Activated CD8-positive, alpha-beta T cell treated with anti-CD3 and anti-CD28 coated beads, Interleukin-2, amount 10 ng/mL, durations not matched to agents 7 days and 5 days (primary cell): ENCODE measurements at regions of chr19 and their contacts with region 1.

Region 1: GRCh38 chr19:7943444-7944176 is at the start of gene TIMM44:
- DNase-seq: peak; percentile 100
- ATAC-seq: peak; percentile 99
- H3K4me3 Mint-ChIP-seq: peak within 1 kb of the TSS; percentile 91
- H3K27ac Mint-ChIP-seq: peak within 1 kb of the TSS; percentile 97
- H3K4me1 Mint-ChIP-seq: peaks cover 39% of the 10 kb centered on the region
- H3K27me3 Mint-ChIP-seq: no peaks in the 10 kb centered on the region
- total RNA-seq, gene TIMM44: 63.6 to 69.6 TPM

Region 2: DNA sequence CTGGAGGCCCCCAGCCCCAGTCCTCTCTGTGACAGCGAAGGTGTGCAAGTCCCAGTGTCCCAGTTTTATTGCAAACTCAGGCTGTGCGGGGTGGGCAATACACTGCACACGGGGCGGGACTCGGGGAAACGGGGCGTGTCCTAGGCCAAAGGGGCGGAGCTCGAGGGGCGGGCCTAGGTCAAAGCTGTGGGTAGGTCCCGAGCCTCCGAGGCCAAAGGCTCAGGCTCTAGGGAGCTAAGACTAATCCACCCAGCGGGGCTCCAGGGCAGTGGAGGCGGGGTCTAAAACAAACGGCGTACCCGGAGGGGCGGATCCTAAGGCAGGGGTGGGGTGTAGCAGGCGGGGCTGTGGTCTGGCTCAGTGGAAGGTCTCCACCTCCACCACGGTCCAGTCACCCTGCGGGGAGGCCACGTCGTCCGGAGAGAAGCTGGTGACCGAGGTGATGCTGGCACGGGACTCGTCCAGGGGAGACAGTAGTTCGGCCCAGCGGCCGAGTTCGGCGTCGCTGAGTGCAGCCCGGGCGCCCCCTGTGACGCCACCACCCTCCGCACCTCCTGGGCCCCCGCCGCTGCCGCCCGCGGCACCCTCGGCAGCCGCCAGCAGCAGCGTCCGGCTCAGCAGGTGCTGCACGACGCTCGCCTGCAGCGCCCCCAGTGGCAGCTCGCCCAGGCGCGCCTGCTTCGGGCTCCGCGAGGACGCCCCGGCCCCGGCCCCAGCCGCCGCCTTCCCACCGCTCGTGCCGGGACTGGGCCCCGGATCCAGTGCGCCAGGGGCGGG is 74.7 kb before region 1 on chr19:
- CTCF ChIA-PET with region 1: interaction called, 16 read pairs
- POLR2A ChIA-PET with region 1: interaction called, 5 read pairs
- DNase-seq: peak; percentile 83
- ATAC-seq: peak; percentile 80
- H3K4me3 Mint-ChIP-seq: peak overlapping the region; percentile 65
- H3K27ac Mint-ChIP-seq: peak overlapping the region; percentile 74
- H3K4me1 Mint-ChIP-seq: peaks cover 47% of the 10 kb centered on the region
- H3K27me3 Mint-ChIP-seq: peaks cover 47% of the 10 kb centered on the region

Region 3: GRCh38 chr19:7883796-7884570 is 59.6 kb before region 1 on chr19:
- CTCF ChIA-PET with region 1: no interaction called
- POLR2A ChIA-PET with region 1: no interaction called
- DNase-seq: no peak
- ATAC-seq: no peak
- H3K4me3 Mint-ChIP-seq: no peak overlapping the region
- H3K27ac Mint-ChIP-seq: no peak overlapping the region
- H3K4me1 Mint-ChIP-seq: no peaks in the 10 kb centered on the region
- H3K27me3 Mint-ChIP-seq: peaks cover 9% of the 10 kb centered on the region

Region 4: DNA sequence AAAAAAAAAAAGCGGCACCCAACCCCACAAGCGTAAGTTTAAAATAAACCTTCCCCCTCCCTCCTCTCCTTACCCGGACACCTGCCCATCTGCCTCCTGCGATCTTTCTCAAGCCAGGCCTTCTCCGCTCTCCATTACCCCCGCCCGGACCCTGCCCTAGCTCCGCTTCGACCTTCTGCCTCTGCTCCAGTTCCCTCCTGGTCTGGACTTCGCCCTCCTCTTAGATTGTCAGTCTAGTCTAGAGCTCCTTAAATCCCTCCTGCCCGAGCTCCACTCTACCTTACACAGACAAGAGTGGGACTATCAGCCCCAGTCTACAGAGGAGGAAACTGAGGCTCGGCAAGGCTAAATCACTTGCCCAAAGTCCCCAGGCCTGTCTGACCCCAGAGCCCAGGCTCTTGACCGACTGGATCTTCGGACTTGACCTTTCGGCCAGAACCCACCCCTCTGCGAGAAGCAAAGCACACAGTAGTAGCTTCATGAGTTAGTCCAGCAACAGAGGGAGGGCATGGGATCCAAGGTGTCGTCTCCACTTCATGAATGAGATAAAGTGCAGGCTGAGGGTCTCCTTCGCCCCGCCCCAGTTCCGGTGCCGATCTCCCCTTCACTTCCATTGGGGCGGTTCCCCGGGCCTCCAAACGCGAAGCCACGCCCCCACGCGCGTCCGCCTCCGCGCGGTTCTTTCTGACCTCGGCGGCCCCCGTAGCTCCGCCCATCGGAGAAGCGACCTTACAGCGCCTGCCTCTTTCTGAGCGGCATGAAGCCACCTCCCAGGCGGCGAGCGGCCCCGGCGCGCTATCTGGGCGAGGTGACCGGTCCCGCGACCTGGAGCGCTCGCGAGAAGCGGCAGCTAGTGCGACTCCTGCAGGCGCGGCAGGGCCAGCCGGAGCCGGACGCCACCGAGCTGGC is 23.7 kb before region 1 on chr19 and contains the start of gene SNAPC2:
- CTCF ChIA-PET with region 1: interaction called, 20 read pairs
- POLR2A ChIA-PET with region 1: interaction called, 17 read pairs
- DNase-seq: peak; percentile 98
- ATAC-seq: peak; percentile 79
- H3K4me3 Mint-ChIP-seq: peak within 1 kb of the TSS; percentile 96
- H3K27ac Mint-ChIP-seq: peak within 1 kb of the TSS; percentile 94
- H3K4me1 Mint-ChIP-seq: peaks cover 47% of the 10 kb centered on the region
- H3K27me3 Mint-ChIP-seq: peaks cover 30% of the 10 kb centered on the region
- total RNA-seq, gene SNAPC2: 18.6 to 19.0 TPM

Region 5: DNA sequence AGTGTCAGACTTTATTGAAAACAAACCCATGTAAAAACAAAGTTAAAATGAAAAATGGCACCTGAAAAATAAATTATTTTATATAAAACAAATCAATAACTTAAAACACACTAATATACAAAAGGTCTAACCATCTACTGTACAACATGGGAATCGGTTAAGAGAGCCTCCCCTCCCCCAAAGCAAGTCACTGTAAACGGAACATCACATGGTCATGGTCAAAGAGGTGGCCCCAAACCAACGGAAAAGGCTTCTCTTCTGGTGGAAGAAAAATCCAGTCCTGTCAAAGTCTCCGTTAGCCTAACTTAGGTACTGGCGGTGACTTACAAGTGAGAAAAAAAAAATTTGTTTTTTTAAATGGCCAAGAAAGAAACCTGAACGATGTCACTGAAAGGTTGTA is 15.6 kb after region 1 on chr19:
- CTCF ChIA-PET with region 1: interaction called, 17 read pairs
- POLR2A ChIA-PET with region 1: no interaction called
- DNase-seq: no peak
- ATAC-seq: no peak
- H3K4me3 Mint-ChIP-seq: no peak overlapping the region
- H3K27ac Mint-ChIP-seq: no peak overlapping the region
- H3K4me1 Mint-ChIP-seq: peaks cover 2% of the 10 kb centered on the region
- H3K27me3 Mint-ChIP-seq: no peaks in the 10 kb centered on the region

Region 6: GRCh38 chr19:7997809-7998480 is 54.3 kb after region 1 on chr19:
- CTCF ChIA-PET with region 1: interaction called, 35 read pairs
- POLR2A ChIA-PET with region 1: interaction called, 5 read pairs
- DNase-seq: no peak
- ATAC-seq: no peak
- H3K4me3 Mint-ChIP-seq: no peak overlapping the region
- H3K27ac Mint-ChIP-seq: no peak overlapping the region
- H3K4me1 Mint-ChIP-seq: peaks cover 45% of the 10 kb centered on the region
- H3K27me3 Mint-ChIP-seq: no peaks in the 10 kb centered on the region

Region 7: GRCh38 chr19:8252922-8253589 is 309.4 kb after region 1 on chr19:
- CTCF ChIA-PET with region 1: interaction called, 10 read pairs
- POLR2A ChIA-PET with region 1: no interaction called
- DNase-seq: peak; percentile 88
- ATAC-seq: peak; percentile 92
- H3K4me3 Mint-ChIP-seq: no peak overlapping the region
- H3K27ac Mint-ChIP-seq: no peak overlapping the region
- H3K4me1 Mint-ChIP-seq: peaks cover 7% of the 10 kb centered on the region
- H3K27me3 Mint-ChIP-seq: no peaks in the 10 kb centered on the region